Psoas muscle (tissue), 8 donors: ENCODE measurements at regions of chr2 and their contacts with region 1.

Region 1: DNA sequence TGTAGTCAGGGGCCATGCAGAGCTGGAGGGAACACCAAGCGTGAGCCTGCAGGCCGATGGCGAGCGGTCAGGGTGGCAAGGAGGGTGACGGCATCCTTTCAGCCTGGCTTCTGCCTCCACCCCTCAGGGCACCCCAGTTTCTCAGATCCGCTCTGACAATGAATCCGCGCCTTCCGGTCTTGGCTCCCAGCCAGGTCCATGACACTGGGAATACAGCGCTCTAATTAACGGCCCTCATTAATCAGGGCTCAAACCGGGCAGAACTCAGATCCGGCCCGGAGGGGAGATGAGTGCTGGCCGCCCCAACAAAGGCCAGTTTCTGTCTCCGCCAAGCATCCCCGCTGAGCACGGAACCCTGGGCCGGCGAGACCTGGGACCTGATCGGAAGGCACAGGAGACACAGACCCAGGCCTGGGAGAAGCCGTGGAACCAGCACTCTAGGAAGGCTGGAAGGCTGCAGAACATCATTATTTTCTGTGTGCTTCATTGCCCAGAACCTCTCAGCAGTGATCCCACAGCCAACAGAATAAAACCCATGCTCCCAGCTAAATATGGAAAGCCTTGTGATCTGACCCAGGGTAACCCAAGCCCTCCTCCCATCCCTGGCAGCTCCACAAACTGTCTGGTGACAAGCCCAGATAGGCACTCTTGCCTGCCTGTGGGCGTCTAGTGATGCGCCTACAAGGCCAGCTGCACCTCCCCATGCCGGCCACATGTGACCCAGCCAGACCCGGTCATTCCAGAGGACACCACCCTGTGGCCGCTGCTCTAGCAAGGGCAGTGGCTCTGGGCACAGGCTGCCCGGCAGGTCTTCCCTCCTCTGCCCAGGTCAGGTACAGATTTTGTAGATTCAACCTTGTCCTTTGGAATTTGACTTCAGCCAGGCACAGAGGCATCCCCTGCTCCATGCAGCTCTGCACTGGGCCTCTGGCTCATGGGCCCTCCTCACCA is 438.7 kb upstream of the MYT1L start:
- DNase-seq: peak; percentile 79 to 90
- ATAC-seq: peak; percentile 98 to 100 (median 100)
- H3K4me3 ChIP-seq: peak overlapping the region; percentile 7
- H3K27ac ChIP-seq: peak overlapping the region; percentile 75
- H3K4me1 ChIP-seq: peaks cover 5% of the 10 kb centered on the region
- H3K27me3 ChIP-seq: no peaks in the 10 kb centered on the region
- CTCF ChIP-seq: peak; percentile 56

Region 2: GRCh38 chr2:1972422-1972821 is 797.3 kb before region 1 on chr2:
- intact Hi-C with region 1: no loop called
- DNase-seq: no peak
- ATAC-seq: no peak
- H3K4me3 ChIP-seq: no peak overlapping the region
- H3K27ac ChIP-seq: no peak overlapping the region
- H3K4me1 ChIP-seq: no peaks in the 10 kb centered on the region
- H3K27me3 ChIP-seq: peaks cover 0 to 2% (median 0%) of the 10 kb centered on the region in 3 donors
- CTCF ChIP-seq: no peak

Region 3: GRCh38 chr2:2613279-2614199 is 156.2 kb before region 1 on chr2:
- intact Hi-C with region 1: loop called in 1 of 2 experiments (anchors 5 kb)
- DNase-seq: peak; percentile 89 to 96
- ATAC-seq: peak; percentile 99 to 100 (median 100)
- H3K4me3 ChIP-seq: peak overlapping the region; percentile 69
- H3K27ac ChIP-seq: peak overlapping the region; percentile 92
- H3K4me1 ChIP-seq: no peaks in the 10 kb centered on the region
- H3K27me3 ChIP-seq: peaks cover 0 to 2% (median 0%) of the 10 kb centered on the region in 3 donors
- CTCF ChIP-seq: no peak

Region 4: DNA sequence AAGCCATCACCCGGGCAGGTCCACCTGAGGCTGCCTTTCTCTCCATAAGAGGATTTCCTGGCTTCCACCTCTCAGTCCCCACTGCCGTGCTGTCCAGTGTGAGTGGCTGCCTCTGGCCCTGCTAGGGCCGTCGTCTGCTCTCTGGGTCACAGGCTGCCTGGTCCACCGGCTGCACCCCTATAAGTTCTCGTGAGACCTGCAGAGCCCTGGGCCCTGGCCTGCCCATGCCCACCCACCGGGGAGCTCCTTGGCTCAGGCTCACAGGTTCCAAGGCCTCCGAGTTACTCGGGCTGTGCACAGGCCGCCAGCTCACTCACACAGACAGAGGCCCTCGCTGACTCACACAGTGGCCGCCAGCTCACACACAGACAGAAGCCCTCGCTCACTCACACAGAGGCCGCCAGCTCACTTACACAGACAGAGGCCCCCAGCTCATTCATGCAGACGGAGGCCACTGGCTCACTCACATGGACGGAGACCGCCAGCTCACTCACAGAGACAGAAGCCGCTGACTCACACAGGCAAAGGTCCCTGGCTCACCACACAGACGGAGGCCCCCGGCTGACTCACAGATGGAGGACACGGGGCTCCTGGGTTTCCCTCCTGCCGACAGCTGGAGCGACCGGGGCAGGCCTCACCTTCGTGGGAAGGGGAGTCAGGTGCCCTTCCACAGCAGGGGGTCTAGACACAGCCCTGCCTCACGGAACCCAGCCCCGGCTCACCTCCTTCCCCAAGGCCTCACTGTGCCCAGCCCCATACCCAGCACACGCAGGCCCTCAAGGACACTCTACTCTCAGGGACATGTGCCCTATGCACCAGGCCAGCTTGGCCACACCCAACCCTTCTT is 104.5 kb before region 1 on chr2:
- intact Hi-C with region 1: loop called in 1 of 2 experiments (anchors 5 kb)
- DNase-seq: peak in 1 of 2 donors; percentile 69
- ATAC-seq: peak in 1 of 4 donors; percentile 18
- H3K4me3 ChIP-seq: no peak overlapping the region
- H3K27ac ChIP-seq: no peak overlapping the region
- H3K4me1 ChIP-seq: peaks cover 18% of the 10 kb centered on the region
- H3K27me3 ChIP-seq: no peaks in the 10 kb centered on the region
- CTCF ChIP-seq: no peak

Region 5: DNA sequence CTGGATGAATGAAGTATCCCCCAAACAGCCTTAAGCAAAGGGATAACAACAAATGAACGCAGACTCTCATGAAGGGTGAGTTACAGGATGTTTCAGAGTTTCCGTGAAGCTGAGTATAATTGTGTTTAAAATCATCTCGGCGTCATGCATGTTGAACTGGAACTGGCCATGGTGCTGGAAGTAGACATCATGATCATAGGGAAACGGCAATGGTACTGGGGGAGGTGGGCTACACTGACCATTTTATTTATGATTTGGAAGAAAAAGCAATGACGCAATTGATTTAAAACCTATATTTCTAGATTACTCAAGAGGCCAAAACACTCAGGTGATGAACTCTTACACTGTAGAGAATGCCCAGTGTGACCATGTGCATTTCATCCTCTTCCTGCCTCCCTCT is 50.7 kb before region 1 on chr2:
- intact Hi-C with region 1: no loop called
- DNase-seq: no peak
- ATAC-seq: no peak
- H3K4me3 ChIP-seq: no peak overlapping the region
- H3K27ac ChIP-seq: no peak overlapping the region
- H3K4me1 ChIP-seq: no peaks in the 10 kb centered on the region
- H3K27me3 ChIP-seq: no peaks in the 10 kb centered on the region
- CTCF ChIP-seq: no peak

Region 6: GRCh38 chr2:2846332-2847208 is 76.8 kb after region 1 on chr2:
- intact Hi-C with region 1: loop called in 1 of 2 experiments (anchors 5 kb)
- DNase-seq: peak; percentile 72 to 86
- ATAC-seq: peak; percentile 89 to 92 (median 91)
- H3K4me3 ChIP-seq: no peak overlapping the region
- H3K27ac ChIP-seq: peak overlapping the region; percentile 85
- H3K4me1 ChIP-seq: peaks cover 6% of the 10 kb centered on the region
- H3K27me3 ChIP-seq: no peaks in the 10 kb centered on the region
- CTCF ChIP-seq: no peak

Region 7: DNA sequence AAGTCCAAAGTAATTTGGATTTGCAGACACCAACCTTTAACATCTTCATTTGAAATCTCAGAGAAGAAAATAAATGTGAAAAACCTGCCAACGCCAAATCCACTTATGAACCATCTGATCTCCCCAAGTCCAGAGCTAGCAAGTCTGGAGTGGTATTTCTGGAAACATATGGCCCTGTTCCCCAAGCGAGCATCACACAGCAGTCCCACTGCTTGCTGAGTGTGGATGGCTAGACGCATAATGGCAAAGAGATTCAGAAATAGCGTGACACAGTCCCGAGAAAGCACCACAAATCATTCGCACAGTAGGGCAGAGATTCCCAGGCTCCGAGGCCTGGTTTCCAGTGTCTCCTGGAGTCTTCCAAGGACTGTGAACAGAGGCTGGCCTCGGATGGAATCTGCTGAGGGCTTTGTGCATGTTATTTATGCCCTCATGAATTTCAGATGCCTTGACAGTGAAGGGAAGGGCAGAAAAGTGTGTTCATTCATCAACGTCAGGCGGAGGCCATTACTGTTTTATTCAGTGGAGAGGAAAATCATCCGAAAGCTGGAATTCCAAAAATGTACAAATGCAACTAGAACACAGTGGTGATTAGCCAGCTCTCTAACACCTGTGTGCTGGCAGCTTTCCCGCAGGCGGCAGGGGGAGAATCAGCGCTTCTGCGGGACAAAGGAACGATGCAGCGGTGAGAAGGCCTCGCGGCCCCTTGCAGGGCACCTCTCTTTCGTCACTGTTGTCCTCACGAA is 190.9 kb after region 1 on chr2:
- intact Hi-C with region 1: no loop called
- DNase-seq: no peak
- ATAC-seq: no peak
- H3K4me3 ChIP-seq: no peak overlapping the region
- H3K27ac ChIP-seq: no peak overlapping the region
- H3K4me1 ChIP-seq: no peaks in the 10 kb centered on the region
- H3K27me3 ChIP-seq: no peaks in the 10 kb centered on the region
- CTCF ChIP-seq: no peak